ENCODE measurements at regions of chr5 and their contacts with region 1.

Region 1: GRCh38 chr5:143314659-143315058 is 88.8 kb downstream of the NR3C1 start:
- DNase-seq: peak in 1 of 2 experiments; percentile 46
- H3K4me3 ChIP-seq: 0 out of 2 replicates have a peak overlapping the region, but pooled peaks have one; percentile 17
- H3K27ac ChIP-seq: peak overlapping the region; percentile 31; the same call in 1 of the 2 replicates
- H3K4me1 ChIP-seq: peaks cover 54% of the 10 kb centered on the region
- H3K27me3 ChIP-seq: no peaks in the 10 kb centered on the region
- CTCF ChIP-seq: no peak

Region 2: GRCh38 chr5:143186623-143187022 is 128.0 kb before region 1 on chr5:
- CTCF ChIA-PET with region 1: no interaction called
- POLR2A ChIA-PET with region 1: no interaction called
- intact Hi-C with region 1: loop called (anchors 5 kb)
- DNase-seq: no peak
- H3K4me3 ChIP-seq: no peak overlapping the region
- H3K27ac ChIP-seq: no peak overlapping the region
- H3K4me1 ChIP-seq: peaks cover 19% of the 10 kb centered on the region
- H3K27me3 ChIP-seq: no peaks in the 10 kb centered on the region
- CTCF ChIP-seq: no peak

Region 3: DNA sequence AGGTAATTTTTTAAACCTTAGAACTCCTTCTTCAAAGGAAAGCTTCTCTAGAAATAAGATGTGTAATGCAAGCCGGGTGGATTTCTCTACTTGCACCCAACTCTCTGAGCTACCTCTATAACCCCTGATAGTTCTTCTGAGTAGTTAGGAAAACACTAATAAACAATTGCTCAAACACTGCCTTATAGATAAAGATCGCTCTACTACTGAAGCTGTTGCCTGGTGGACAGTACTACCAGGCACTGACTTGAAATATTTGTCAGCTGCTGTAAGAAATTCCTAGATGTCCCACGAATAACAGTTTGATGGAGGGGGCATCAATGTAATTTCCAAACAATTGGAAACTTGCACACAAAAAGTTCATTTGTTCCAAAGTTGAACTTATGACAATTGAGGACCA is 46.8 kb after region 1 on chr5:
- CTCF ChIA-PET with region 1: no interaction called
- POLR2A ChIA-PET with region 1: no interaction called
- intact Hi-C with region 1: no loop called
- DNase-seq: no peak
- H3K4me3 ChIP-seq: no peak overlapping the region
- H3K27ac ChIP-seq: no peak overlapping the region
- H3K4me1 ChIP-seq: peaks cover 7% of the 10 kb centered on the region
- H3K27me3 ChIP-seq: no peaks in the 10 kb centered on the region
- CTCF ChIP-seq: no peak

Region 4: DNA sequence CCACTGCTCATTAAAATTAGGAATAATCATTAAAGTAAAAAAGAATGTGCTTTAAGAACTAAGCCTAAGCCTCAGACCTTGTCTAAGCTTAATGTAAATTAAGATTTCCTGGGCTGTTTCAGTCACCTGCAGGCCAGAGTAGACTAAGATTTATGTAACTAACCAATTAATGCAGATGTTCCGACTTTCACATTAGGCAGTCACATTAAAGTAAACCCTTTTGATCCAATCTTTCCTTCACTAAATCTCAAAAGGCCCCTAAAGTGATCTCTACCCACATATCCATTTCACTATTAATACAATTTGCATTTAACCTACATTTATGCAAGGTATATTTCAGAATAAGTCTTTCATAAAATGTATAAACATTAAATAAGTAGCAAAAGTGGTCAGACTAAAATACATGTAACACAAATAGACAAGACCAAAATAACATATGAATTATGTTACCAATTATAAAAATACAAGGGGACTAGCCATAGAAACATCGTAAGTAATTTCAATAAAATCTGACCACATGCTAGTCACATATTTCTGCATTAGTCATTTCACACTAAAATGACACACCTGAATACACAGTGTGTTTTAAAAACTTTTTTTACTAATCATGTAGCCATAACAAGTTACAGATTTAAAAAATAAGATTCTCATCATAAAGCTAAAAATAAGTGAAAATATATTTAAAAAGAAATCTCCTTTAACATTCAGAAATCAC is 81.1 kb after region 1 on chr5:
- CTCF ChIA-PET with region 1: no interaction called
- POLR2A ChIA-PET with region 1: interaction called, 12 read pairs
- intact Hi-C with region 1: loop called (anchors 5 kb)
- DNase-seq: peak in 1 of 2 experiments; percentile 44
- H3K4me3 ChIP-seq: peak overlapping the region; percentile 28; the same call in 1 of the 2 replicates
- H3K27ac ChIP-seq: peak overlapping the region; percentile 50
- H3K4me1 ChIP-seq: peaks cover 64% of the 10 kb centered on the region
- H3K27me3 ChIP-seq: no peaks in the 10 kb centered on the region
- CTCF ChIP-seq: no peak

Measured in PC-9 (cell line).